Tibial artery (tissue), 4 donors: ENCODE measurements at regions of chr11 and their contacts with region 1.

Region 1: DNA sequence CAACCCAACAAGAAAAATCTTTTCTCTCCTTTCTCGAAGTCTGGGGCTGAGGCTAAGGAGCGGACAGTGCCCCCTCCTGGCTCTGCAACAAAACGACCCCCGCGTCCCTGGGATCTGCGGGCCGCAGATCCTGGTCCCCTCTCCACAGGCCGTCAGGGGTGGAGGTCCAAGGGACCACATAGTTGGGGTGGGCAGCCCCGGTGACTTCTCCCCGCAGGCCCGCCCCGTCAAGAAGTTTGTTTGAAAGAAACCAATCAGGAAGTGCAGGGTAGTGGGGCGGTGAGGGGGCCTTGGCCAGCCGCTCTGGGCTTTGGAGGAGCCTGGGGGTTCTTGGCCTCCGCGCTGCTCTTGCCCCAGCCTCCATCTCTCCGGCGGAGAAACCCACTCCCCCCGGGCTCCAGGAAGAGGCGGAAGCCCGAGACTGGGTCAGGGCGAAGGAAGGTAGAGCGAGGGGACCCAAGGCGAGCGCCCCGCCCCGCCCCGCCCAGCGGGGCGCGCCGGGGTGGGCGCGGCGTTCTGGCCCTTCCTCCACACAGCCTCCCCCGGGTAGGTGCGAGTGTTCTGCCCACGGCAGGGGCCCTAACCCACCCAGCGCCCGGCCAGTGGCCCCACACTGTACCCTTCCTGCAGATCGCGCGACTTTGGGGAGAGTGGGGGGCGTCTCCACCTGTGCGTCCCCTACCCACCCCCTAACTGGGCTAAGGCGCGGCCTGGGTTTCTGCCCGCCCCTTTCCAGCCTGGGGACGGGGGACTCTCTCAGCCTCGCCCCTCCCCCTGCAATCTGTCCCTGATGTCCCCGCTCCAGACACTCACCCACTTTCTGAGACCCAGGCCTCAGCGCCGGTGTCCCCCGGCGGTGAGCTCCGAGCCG is 1.3 kb downstream of the TP53I11 start:
- DNase-seq: no peak
- H3K4me3 ChIP-seq: peak overlapping the region; percentile 76 to 78
- H3K27ac ChIP-seq: peak overlapping the region; percentile 69 to 73
- H3K4me1 ChIP-seq: peaks cover 0 to 36% (median 24%) of the 10 kb centered on the region in 4 donors
- H3K27me3 ChIP-seq: no peaks in the 10 kb centered on the region
- CTCF ChIP-seq: peak; percentile 43 to 48

Region 2: DNA sequence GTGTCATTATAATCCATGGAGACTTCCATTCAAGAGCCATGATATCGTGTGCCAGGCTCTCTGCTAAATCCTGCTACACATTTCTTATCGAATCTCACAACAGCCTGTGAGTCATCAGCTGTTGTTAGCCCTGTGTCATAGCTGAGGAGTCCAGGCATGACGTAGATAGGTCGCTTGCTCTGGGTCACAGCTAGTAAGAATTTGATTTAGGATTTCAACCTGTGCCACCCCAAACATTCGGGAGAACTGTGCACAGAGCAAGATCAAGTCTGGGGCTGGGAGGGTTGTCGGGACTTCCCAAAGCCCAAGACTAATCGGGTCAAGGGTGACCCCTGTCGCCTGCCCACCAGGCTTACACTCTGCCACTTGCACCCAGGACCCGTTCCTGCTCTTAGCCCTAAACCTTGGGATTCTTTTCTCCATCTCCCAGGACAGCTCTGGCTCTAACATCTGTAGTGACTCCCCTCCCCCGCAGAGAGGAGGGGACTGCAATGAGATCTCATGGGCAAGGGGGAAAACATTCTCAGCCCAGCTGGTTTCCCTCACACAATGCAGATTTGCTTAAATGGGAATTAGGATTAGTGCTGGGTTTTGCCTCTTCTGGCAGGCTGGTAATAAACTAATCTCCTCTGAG is 188.4 kb before region 1 on chr11:
- intact Hi-C with region 1: no loop called
- DNase-seq: peak; percentile 76 to 83
- H3K4me3 ChIP-seq: no peak overlapping the region
- H3K27ac ChIP-seq: peak overlapping the region; percentile 3 to 10
- H3K4me1 ChIP-seq: peaks cover 0 to 66% (median 36%) of the 10 kb centered on the region in 4 donors
- H3K27me3 ChIP-seq: no peaks in the 10 kb centered on the region
- CTCF ChIP-seq: no peak

Region 3: DNA sequence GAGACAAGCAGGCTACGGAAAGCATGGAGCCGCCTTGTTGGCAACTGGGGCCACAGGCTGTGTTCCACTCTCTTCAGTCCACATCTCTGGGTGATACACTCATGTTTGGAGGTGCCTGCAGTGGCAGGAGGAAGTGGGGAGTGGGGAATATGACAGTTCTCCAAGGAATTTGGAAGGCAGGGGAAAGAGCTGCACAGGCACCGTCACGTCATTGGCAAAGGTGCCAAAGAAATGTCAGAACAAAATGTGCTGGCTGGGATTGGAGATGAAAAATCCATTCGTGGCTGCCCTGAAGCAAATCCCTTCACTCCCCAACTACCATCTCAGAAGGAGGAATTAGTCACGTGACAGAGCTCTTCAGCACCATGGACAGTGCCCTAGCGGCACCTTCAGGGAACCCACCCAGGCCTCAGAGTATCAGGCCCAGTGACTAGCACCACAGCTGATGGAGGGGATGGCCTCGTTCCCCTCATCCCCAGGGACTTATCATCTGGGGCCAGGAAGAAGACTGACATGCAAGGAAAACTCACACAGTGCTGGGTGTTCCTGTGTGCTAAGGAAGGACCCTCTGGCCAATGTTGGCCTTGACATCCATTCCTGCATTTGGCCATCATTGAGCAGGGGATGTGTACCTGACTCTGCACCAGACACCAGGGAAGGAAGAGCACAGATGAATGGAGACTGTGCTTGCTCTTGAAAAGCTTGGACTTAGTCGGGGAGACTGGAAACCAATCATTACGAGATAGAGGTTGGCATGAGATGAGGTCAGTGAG is 148.5 kb after region 1 on chr11:
- intact Hi-C with region 1: loop called (anchors 5 kb)
- DNase-seq: peak in 1 of 2 donors; percentile 61
- H3K4me3 ChIP-seq: no peak overlapping the region
- H3K27ac ChIP-seq: no peak overlapping the region
- H3K4me1 ChIP-seq: peaks cover 0 to 32% (median 18%) of the 10 kb centered on the region in 4 donors
- H3K27me3 ChIP-seq: peaks cover 0 to 6% of the 10 kb centered on the region in 2 donors
- CTCF ChIP-seq: peak in 1 of 2 experiments; percentile 17

Region 4: DNA sequence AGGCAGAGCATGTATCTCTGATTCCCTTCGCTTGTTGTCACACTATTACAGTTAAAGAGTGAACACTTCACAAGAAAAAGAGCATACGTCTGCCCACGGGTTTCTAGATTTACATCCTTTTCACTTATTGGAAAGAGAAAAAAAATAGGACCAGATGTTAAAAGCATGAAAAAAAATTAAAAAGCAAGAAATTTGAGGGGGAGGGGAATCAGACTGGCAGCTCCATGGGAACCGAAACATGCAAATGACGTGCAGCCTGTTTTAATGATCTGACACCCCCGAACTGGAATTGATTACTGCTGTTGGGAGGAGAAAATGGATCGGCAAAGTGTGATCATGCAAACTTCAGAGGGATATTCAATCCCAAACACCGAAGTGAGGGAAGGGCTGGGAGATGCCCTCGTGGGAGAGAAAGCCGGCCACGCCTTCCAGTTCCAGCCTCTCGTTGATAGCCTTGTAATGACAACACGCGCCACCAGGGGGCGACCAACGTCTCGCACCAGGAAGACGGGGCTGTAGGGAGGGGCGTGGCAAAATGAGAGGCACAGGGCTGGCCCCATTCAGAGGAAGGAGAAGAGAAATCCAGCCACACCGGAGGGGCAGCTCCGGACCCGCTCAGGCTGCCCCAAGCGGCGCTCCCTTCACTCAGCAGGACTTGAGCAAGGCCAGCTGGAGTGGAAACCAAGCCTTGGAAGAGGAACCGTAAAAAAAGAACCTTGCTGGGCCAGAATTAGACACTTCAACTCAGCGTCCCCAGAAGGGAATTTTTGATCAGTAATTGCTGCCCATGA is 390.5 kb after region 1 on chr11:
- intact Hi-C with region 1: loop called (anchors 10 kb)
- DNase-seq: peak; percentile 95 to 96
- H3K4me3 ChIP-seq: peak overlapping the region; percentile 14 to 19
- H3K27ac ChIP-seq: peak overlapping the region in 1 of 2 donors; percentile 38
- H3K4me1 ChIP-seq: peaks cover 0 to 9% (median 2%) of the 10 kb centered on the region in 4 donors
- H3K27me3 ChIP-seq: peaks cover 0 to 4% of the 10 kb centered on the region in 2 donors
- CTCF ChIP-seq: peak; percentile 90 to 93